ENCODE measurements at regions of chr13 and their contacts with region 1.

Region 1: GRCh38 chr13:21638319-21639282 is 32.3 kb upstream of the FGF9 start:
- DNase-seq: no peak
- ATAC-seq: no peak

Region 2: DNA sequence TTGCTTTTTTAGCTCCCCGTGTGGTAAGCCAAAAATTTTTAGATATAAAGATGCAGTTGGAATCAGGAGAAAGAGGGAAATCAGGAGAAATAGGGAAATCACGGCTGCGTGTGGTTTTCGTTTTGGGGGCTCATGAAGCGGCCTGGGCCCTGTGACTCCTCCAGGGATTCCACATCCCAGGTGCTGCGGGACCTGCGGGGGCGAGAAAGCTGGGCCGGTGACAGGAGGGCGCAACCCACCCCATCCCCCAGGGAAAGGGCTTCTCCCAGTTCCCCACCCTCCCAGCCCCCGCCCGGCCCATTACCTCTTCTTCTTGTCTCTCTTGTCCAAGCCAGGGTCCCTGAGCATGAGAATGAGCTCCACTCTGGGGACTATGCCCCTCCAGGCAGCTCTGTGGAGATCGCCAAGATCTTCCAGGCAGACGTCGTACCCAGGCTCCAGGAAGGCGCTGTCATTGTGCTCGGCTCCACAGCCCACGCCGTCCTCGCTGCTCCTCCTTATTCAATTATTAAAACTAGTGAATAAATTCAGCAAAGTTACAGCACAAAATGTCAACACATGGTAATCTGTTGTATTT is 351.2 kb before region 1 on chr13:
- intact Hi-C with region 1: no loop called
- DNase-seq: no peak
- ATAC-seq: no peak

Region 3: DNA sequence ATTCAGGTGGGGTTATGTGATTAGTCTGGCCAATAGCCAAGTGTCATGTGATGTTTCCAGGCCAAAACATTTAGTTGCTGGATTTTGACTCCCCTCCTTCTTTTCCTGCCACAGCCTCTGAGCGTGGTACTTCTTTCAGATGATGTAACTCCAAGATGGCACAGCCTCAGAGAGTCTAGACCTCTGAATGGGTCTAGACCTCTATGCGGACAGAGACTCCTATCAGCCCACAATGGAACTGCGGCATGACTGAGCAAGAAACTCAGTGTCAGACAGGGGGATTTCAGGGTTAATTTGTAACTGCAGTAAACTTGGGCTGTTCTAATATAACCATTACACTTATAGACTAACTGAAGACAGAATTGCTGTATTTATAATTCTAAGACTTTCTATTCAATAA is 136.9 kb before region 1 on chr13:
- intact Hi-C with region 1: no loop called
- DNase-seq: no peak
- ATAC-seq: no peak

Region 4: GRCh38 chr13:22757530-22758120 is 1119.0 kb after region 1 on chr13:
- intact Hi-C with region 1: loop called (anchors 5 kb)
- DNase-seq: no peak
- ATAC-seq: no peak